ENCODE measurements at regions of chr20 and their contacts with region 1.

Region 1: DNA sequence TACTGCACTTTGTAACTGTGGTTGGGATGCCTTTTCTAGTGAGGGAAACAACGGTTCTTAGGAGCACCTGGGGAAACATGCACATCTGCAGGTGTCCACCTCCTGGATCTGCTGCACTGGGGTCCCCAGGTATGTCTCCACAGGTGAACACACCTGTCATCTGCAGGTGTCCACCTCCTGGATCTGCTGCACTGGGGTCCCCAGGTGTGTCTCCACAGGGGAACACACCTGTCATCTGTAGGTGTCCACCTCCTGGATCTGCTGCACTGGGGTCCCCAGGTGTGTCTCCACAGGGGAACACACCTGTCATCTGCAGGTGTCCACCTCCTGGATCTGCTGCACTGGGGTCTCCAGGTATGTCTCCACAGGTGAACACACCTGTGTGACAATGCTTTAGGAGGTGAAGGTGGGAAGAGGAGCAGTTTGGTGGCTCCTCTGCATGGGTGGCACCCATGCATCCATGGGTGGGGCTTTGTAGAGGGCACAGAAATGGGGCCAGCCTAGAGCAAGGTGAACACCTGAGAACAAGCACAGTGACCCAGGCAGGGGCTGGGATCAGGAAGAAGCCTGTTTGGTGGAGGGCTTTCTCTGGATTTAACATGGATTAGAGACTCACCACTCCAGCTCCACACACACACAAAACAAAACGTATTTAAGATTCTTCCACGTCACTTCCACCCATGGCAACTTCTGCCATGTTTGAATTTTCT is 206.0 kb upstream of the CDH4 start:
- DNase-seq: no peak
- ATAC-seq: no peak

Region 2: DNA sequence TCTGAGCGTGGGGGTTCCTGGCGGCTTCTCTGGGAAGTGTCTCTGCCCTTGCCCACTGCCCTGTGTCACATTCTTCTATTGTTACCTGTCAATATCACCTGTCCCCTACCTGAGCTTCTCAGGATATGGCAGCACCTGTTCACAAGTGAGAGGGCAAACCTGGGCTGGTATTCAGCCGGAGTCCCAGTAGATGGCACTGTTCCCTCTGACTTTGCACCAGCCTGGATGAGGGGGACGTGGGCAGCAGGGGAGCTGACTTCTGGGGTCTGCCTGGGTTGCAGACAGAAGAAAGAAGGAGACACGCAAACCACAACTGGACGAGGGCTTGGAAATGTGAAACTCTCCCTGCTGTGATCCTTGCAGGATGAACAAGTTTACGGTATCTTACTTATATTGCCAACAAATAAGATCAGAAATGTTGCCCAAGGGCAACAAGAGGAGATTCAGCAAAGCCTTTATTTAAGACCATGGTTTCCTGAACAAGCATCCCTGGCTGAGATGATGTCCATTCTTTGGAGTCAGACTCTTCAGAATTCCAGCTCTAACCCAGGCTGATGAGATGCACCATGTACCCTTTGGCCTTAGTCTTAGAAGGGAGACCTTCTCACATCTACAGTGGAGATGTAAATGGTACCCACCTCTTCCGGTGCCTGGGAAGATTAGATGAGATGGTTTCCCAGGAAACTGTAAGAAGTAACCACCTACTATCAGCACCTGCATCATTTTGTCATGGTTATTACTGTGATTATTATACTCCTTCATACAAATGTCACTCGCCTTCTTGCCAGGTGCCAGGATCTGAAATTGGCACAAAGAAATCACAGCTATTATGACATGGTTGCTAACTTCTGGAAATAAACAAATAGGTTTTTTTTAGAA is 194.0 kb before region 1 on chr20:
- intact Hi-C with region 1: no loop called
- DNase-seq: no peak
- ATAC-seq: no peak

Region 3: DNA sequence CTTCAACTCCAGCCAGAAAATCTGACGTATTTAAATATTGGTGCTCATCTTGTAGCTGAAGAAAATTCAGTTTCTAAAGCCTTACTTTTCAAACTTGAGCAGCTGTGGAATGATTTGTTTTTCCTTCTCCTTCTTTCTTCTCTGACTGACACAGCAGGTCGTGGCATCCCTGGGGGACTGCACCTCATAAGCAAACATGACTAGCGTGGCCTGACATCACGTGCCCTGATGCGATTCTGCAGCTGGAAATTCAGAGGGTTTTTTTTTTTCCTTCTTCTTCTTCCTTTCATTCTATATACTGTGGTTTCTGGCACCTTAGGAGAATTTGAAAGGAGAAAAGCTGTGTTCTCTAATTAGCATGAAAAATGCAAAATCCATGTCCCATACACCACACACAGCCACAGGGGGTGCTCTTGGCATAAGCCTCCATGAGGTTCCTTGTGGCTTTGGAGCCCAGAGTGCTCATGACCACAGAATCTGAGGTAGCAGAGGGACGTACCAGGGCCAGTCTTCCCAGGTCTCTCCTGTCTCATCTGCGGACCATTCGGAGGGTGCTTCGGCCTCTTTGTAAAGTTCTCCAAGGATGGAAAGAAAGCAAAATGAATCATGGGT is 52.5 kb before region 1 on chr20:
- intact Hi-C with region 1: loop called (anchors 5 kb)
- DNase-seq: no peak
- ATAC-seq: peak; percentile 59

Region 4: DNA sequence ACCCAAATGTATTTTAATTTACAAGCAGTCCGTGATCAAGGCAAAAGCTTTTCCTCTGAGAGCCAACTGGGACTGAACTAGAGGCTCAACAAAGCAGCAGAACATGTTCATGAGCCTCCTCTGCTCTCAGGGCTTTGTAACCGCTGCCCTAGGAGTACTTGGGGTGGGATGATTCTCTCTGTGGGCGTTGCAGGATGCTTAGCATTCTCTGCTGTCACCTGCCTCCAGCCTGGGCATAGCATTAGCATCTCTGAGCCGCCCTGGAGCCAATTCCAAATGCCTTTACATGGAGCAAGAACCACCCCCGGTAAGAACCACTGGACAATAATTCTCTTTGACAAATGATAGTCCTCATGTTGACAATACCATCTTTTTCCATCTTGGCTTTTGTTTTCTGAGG is 31.5 kb before region 1 on chr20:
- intact Hi-C with region 1: no loop called
- DNase-seq: no peak
- ATAC-seq: no peak